ENCODE measurements at regions of chr7 and their contacts with region 1.

Region 1: GRCh38 chr7:112143582-112143981 is 62.6 kb downstream of the DOCK4 start:
- DNase-seq: peak; percentile 94
- ATAC-seq: peak; percentile 89
- H3K4me3 ChIP-seq: no peak overlapping the region
- H3K27ac ChIP-seq: peak overlapping the region; percentile 40; the same call in 1 of the 2 replicates
- H3K4me1 ChIP-seq: peaks cover 11% of the 10 kb centered on the region
- H3K27me3 ChIP-seq: no peaks in the 10 kb centered on the region
- CTCF ChIP-seq: no peak
- POLR2A ChIP-seq: no peak
- RAD21 ChIP-seq: no peak

Region 2: DNA sequence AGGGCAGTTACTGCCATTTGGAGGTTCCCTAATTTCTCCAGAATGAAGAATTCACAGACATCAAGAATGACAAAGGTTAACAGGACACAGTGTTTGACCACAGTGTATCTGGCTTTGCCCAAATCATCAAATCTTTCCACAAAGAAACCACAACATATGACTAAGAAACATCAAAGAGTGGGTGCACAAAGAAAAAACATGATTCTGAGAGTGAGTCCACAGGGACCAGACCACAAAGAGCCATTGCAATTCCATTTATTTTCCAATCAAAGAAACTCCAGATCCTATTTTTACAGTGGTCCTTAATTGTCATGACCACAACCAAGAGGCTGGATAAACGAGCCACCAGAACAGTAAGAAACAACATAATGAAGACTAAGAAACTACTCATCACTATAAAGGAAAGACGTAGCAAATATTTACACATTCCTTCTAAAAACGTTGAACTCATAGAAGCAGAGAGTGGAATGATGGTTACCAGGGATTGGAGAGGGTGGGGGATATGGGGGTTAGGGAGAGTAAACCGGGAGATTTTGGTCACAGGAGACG is 223.9 kb before region 1 on chr7:
- CTCF ChIA-PET with region 1: no interaction called
- POLR2A ChIA-PET with region 1: interaction called, 13 read pairs
- dilution Hi-C with region 1: no loop called
- in situ Hi-C with region 1: no loop called
- intact Hi-C with region 1: no loop called
- DNase-seq: peak; percentile 55
- ATAC-seq: peak; percentile 84
- H3K4me3 ChIP-seq: no peak overlapping the region
- H3K27ac ChIP-seq: no peak overlapping the region
- H3K4me1 ChIP-seq: no peaks in the 10 kb centered on the region; the same call in 1 of the 2 replicates
- H3K27me3 ChIP-seq: no peaks in the 10 kb centered on the region; the same call in 1 of the 2 replicates
- CTCF ChIP-seq: no peak
- POLR2A ChIP-seq: no peak
- RAD21 ChIP-seq: no peak

Region 3: GRCh38 chr7:112089551-112089950 is 54.0 kb before region 1 on chr7:
- CTCF ChIA-PET with region 1: no interaction called
- POLR2A ChIA-PET with region 1: interaction called, 17 read pairs
- dilution Hi-C with region 1: no loop called
- in situ Hi-C with region 1: no loop called
- intact Hi-C with region 1: no loop called
- DNase-seq: no peak
- ATAC-seq: no peak
- H3K4me3 ChIP-seq: no peak overlapping the region
- H3K27ac ChIP-seq: no peak overlapping the region
- H3K4me1 ChIP-seq: peaks cover 5% of the 10 kb centered on the region; the same call in 1 of the 2 replicates
- H3K27me3 ChIP-seq: no peaks in the 10 kb centered on the region
- CTCF ChIP-seq: no peak
- POLR2A ChIP-seq: no peak
- RAD21 ChIP-seq: no peak

Measured in IMR-90 (cell line).